Caco-2 (cell line): ENCODE measurements at regions of chr7 and their contacts with region 1.

Region 1: GRCh38 chr7:6589829-6590644 is at the start of gene INTS15:
- DNase-seq: peak; percentile 60 to 90
- H3K4me3 ChIP-seq: peak within 1 kb of the TSS; percentile 99
- H3K4me3 Mint-ChIP-seq: peak within 1 kb of the TSS; percentile 77
- H3K27ac Mint-ChIP-seq: peak within 1 kb of the TSS; percentile 40
- H3K4me1 ChIP-seq: peaks cover 4% of the 10 kb centered on the region; the same call in 1 of the 2 replicates
- H3K4me1 Mint-ChIP-seq: no peaks in the 10 kb centered on the region
- H3K27me3 ChIP-seq: no peaks in the 10 kb centered on the region
- H3K27me3 Mint-ChIP-seq: no peaks in the 10 kb centered on the region
- CTCF ChIP-seq: peak; percentile 2 to 80
- total RNA-seq, gene INTS15: 24.7 and 29.6 TPM in 2 replicates

Region 2: DNA sequence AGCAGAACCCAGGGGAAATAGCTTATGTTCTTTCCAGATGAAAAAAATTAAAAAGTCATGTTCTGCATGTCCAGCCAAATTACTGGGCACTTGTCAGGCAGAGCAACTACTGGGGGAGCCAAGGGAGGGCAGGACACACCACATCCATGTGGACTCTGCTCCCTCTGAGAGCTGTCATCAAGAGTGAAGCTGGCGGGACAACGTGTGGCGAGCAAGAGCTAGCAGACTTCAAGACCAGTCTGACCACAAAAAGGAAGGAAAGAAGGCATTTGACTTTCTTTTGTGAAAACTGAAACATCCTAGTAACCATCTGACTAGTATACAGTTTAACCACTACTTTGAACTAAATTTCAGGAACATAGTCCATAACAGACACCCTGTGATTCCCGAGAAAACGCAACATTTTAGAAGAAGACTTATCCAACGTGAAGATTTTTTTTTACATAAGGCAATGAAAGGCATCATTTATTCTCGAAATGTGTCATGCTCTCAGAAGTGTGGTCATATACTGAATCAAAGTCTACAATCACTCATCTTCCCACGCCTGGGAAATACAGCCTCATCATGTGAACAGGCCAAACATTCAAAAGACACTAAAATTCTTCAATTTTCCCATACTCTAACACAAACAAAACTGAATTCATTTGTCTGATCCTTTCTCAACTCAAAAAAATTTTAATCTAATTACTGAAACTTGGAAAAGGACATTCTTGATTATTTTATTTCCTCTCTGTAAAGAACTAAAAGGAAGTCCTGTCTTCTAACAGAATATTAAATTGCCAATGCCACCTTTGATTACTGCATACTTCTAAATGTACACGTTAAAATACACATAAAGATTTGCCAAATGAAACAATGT is 333.1 kb before region 1 on chr7:
- CTCF ChIA-PET with region 1: no interaction called
- POLR2A ChIA-PET with region 1: no interaction called
- intact Hi-C with region 1: no loop called
- DNase-seq: peak; percentile 31 to 54
- H3K4me3 ChIP-seq: no peak overlapping the region
- H3K4me3 Mint-ChIP-seq: no peak overlapping the region
- H3K27ac Mint-ChIP-seq: no peak overlapping the region
- H3K4me1 ChIP-seq: peaks cover 28% of the 10 kb centered on the region; the same call in 1 of the 2 replicates
- H3K4me1 Mint-ChIP-seq: peaks cover 16% of the 10 kb centered on the region
- H3K27me3 ChIP-seq: no peaks in the 10 kb centered on the region
- H3K27me3 Mint-ChIP-seq: no peaks in the 10 kb centered on the region
- CTCF ChIP-seq: no peak

Region 3: DNA sequence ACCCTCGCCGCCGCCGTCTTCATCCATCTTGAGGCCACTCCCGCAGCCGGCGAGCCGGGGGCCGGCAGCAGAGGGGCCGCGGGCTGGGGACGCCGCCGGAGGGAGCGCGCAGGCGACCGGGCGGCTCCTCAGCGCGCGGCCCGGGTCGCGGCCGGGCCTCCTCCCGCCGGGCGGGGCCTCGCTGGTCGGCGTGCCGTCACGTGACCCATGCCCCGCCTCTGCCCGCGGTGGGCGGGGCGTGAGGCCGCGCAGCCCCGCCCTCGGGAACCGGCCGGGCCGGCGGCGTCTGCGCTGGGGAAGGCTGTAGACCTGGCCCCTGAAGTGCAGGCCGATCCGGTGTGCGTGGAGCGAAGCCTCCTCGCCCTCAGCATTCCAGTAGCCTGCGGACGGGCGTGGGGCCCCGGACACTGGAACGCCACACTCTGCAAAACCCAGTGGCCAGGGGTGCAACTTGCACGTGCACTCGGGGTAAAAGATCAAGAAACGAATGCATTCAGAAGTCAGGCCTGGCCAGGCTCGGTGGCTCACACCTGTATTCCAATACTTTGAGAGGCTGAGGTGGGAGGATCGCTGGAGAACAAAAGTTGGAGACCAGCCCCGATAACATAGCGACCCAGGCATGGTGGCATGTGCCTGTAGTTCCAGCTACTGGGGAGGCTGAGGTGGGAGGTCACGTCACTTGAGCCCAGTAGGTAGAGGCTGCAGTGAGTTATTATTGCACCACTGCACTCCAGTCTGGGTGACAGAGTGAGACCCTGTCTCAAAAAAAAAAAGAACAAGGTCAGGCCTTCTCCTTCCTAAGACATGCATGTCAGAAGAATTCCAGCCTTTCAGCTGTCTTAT is 317.3 kb before region 1 on chr7 and contains the start of gene CYTH3:
- CTCF ChIA-PET with region 1: no interaction called
- POLR2A ChIA-PET with region 1: no interaction called
- intact Hi-C with region 1: no loop called
- DNase-seq: peak; percentile 81 to 95
- H3K4me3 ChIP-seq: peak within 1 kb of the TSS; percentile 79
- H3K4me3 Mint-ChIP-seq: peak within 1 kb of the TSS; percentile 99
- H3K27ac Mint-ChIP-seq: peak within 1 kb of the TSS; percentile 88
- H3K4me1 ChIP-seq: peaks cover 71% of the 10 kb centered on the region
- H3K4me1 Mint-ChIP-seq: peaks cover 42% of the 10 kb centered on the region
- H3K27me3 ChIP-seq: no peaks in the 10 kb centered on the region
- H3K27me3 Mint-ChIP-seq: peaks cover 5% of the 10 kb centered on the region
- CTCF ChIP-seq: no peak
- total RNA-seq, gene CYTH3: 27.8 and 29.1 TPM in 2 replicates

Region 4: GRCh38 chr7:6505685-6506574 is 84.1 kb before region 1 on chr7:
- CTCF ChIA-PET with region 1: no interaction called
- POLR2A ChIA-PET with region 1: no interaction called
- intact Hi-C with region 1: no loop called
- DNase-seq: no peak
- H3K4me3 ChIP-seq: no peak overlapping the region
- H3K4me3 Mint-ChIP-seq: no peak overlapping the region
- H3K27ac Mint-ChIP-seq: no peak overlapping the region
- H3K4me1 ChIP-seq: peaks cover 9% of the 10 kb centered on the region
- H3K4me1 Mint-ChIP-seq: peaks cover 9% of the 10 kb centered on the region
- H3K27me3 ChIP-seq: no peaks in the 10 kb centered on the region
- H3K27me3 Mint-ChIP-seq: no peaks in the 10 kb centered on the region
- CTCF ChIP-seq: no peak

Region 5: DNA sequence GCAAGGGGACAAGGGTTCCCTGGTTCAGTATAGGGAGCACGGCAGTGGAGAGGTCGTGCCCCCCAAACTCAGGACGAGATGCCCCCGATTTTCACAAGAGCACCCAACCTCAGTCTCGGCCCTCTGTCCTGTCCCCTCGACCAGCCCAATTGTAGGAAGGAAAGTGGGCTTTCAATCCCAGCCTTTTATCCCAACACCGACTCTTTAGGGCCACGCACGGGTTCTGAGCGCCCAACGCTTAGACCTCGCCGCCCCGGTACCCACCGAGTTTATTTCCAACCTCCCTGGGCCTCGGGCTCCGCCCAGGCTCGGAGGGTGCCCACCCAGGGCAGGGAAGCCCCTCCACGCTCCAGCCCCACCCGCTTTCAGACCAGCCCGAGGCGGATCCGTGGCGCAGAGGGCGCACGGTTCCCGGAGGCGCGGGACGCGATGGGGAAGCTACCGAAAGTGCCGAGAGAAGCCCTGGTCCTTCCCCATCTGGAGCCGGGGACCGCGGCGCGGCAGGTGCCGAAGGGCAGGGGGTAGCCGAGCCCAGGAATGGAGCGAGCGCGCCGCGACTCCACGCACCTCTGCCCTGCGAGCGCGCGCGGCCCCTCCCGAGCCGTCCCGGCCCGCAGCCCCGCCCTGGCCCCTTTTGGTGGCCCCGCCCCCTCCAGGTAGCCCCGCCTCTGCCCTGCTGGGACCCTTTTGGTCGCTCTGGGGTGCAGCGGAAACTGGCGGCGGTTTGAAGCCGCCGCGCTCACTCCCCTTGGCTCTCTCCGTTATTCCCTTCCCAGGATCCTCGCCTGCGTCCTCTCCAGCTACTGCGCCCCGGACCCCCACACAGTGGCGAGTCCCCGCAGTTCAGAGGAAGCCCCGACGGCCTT is 59.2 kb before region 1 on chr7:
- CTCF ChIA-PET with region 1: no interaction called
- POLR2A ChIA-PET with region 1: no interaction called
- intact Hi-C with region 1: no loop called
- DNase-seq: peak in 1 of 2 experiments; percentile 52
- H3K4me3 ChIP-seq: peak overlapping the region; percentile 40
- H3K4me3 Mint-ChIP-seq: peak overlapping the region; percentile 70
- H3K27ac Mint-ChIP-seq: no peak overlapping the region
- H3K4me1 ChIP-seq: no peaks in the 10 kb centered on the region
- H3K4me1 Mint-ChIP-seq: no peaks in the 10 kb centered on the region
- H3K27me3 ChIP-seq: peaks cover 1% of the 10 kb centered on the region
- H3K27me3 Mint-ChIP-seq: peaks cover 28% of the 10 kb centered on the region
- CTCF ChIP-seq: no peak

Region 6: GRCh38 chr7:6558837-6559236 is 31.2 kb before region 1 on chr7:
- CTCF ChIA-PET with region 1: interaction called, 18 read pairs
- POLR2A ChIA-PET with region 1: no interaction called
- intact Hi-C with region 1: no loop called
- DNase-seq: peak; percentile 73 to 75
- H3K4me3 ChIP-seq: no peak overlapping the region
- H3K4me3 Mint-ChIP-seq: no peak overlapping the region
- H3K27ac Mint-ChIP-seq: no peak overlapping the region
- H3K4me1 ChIP-seq: no peaks in the 10 kb centered on the region
- H3K4me1 Mint-ChIP-seq: no peaks in the 10 kb centered on the region
- H3K27me3 ChIP-seq: no peaks in the 10 kb centered on the region
- H3K27me3 Mint-ChIP-seq: no peaks in the 10 kb centered on the region
- CTCF ChIP-seq: peak; percentile 62 to 72